OCI-LY7 (cell line): ENCODE measurements at regions of chr6 and their contacts with region 1.

Region 1: GRCh38 chr6:41072676-41073623 is at the start of gene NFYA:
- DNase-seq: peak; percentile 99
- H3K4me3 ChIP-seq: peak within 1 kb of the TSS; percentile 97
- H3K27ac ChIP-seq: peak within 1 kb of the TSS; percentile 92
- H3K4me1 ChIP-seq: peaks cover 47% of the 10 kb centered on the region
- CTCF ChIP-seq: peak; percentile 55
- total RNA-seq, gene NFYA: 23.5 and 29.5 TPM in 2 replicates

Region 2: DNA sequence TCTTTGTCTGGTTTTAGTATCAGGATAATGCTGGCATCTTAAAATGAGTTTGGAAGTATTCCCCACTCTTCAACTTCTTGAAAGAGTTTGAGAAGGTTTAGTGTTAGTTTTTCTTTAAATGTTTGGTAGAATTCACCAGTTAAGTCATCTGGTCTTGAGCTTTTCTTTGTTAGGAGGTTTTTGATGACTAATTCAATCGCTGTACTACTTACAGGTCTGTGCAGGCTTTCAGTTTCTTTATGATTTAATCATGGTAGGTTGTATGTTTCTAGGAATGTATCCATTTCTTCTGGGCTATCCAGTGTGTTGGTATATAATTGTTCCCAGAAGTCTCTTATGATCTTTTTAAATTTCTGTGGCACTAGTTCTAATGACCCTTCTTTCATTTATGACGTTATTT is 701.3 kb before region 1 on chr6:
- CTCF ChIA-PET with region 1: no interaction called
- POLR2A ChIA-PET with region 1: no interaction called
- intact Hi-C with region 1: no loop called
- DNase-seq: no peak
- H3K4me3 ChIP-seq: no peak overlapping the region
- H3K27ac ChIP-seq: no peak overlapping the region
- H3K4me1 ChIP-seq: no peaks in the 10 kb centered on the region
- CTCF ChIP-seq: no peak

Region 3: DNA sequence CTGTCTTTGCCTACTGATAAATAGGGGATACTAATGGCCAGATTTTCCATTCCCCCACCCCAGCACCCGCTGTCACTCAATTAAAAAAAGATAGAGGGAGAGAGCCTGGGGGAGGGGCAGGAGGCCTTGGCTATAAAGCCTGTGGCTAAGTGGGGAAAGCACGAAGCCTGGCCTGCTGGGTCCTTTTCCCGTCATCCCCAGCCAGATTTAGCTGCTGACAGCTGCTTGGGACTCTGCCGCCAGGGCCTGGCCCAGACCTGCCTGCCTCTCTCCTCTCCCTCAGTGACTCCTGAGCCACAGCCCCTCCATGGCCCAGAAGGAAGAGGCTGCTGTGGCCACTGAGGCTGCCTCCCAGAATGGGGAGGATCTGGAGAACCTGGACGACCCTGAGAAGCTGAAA is 19.9 kb before region 1 on chr6 and contains the start of gene APOBEC2:
- CTCF ChIA-PET with region 1: interaction called, 4 read pairs
- POLR2A ChIA-PET with region 1: interaction called, 13 read pairs
- intact Hi-C with region 1: no loop called
- DNase-seq: no peak
- H3K4me3 ChIP-seq: peak within 1 kb of the TSS; percentile 7
- H3K27ac ChIP-seq: peak within 1 kb of the TSS; percentile 2
- H3K4me1 ChIP-seq: peaks cover 38% of the 10 kb centered on the region
- CTCF ChIP-seq: no peak
- total RNA-seq, gene APOBEC2: not detected in 2 replicates

Region 4: GRCh38 chr6:41132254-41132653 is 59.3 kb after region 1 on chr6:
- CTCF ChIA-PET with region 1: no interaction called
- POLR2A ChIA-PET with region 1: no interaction called
- intact Hi-C with region 1: no loop called
- DNase-seq: no peak
- H3K4me3 ChIP-seq: no peak overlapping the region
- H3K27ac ChIP-seq: no peak overlapping the region
- H3K4me1 ChIP-seq: no peaks in the 10 kb centered on the region
- CTCF ChIP-seq: no peak

Region 5: DNA sequence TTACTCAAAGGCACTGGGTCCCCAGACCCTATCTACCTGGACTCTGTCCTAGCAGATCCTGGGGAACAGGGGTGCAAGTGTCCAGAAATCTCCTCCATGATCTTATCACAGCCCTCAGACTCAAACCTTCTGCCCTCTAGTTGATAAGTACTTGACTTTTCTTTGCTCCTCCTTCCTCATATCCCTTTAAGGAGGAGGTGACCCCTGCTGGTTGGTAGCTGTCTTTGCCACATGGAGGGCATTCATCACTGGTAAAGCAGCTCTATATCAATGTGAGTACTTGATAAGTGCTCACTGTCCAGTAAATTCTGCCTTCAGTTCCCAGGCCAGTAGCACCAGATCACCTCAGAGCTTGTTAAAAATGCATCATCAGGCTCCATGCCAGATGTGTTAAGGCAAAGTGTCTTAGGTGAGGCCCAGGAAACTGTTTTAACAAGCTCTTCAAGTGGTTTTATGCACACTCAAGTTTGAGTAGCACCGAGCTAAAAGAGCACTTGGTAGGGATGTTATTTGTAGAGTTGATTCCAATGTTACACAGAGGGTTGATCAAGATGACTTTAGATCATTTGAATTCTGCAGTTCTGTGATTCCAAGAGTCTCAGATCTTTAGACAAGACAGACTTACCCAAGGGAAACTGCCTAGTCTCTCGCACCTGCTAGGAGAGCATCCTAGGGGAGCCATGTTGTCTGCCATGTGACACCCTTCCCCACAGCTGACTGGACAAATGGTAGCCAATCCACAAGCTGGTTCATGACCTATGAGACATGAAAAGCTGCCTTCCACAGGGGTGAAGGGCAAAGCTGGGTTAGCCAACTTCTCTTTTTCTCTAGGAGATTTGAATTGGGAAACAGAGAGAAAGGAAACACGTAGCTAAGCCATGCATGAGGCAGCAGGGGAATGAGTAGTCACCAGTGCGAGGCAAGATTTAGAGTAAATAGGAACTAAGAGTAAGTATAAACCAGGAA is 109.4 kb after region 1 on chr6:
- CTCF ChIA-PET with region 1: interaction called, 3 read pairs
- POLR2A ChIA-PET with region 1: interaction called, 4 read pairs
- intact Hi-C with region 1: loop called (anchors 2 kb)
- DNase-seq: peak; percentile 80
- H3K4me3 ChIP-seq: no peak overlapping the region
- H3K27ac ChIP-seq: no peak overlapping the region
- H3K4me1 ChIP-seq: peaks cover 30% of the 10 kb centered on the region
- CTCF ChIP-seq: peak; percentile 87

Region 6: GRCh38 chr6:41200296-41200900 is 127.4 kb after region 1 on chr6:
- CTCF ChIA-PET with region 1: no interaction called
- POLR2A ChIA-PET with region 1: interaction called, 7 read pairs
- intact Hi-C with region 1: loop called (anchors 2 kb)
- DNase-seq: peak; percentile 73
- H3K4me3 ChIP-seq: peak overlapping the region; percentile 65
- H3K27ac ChIP-seq: peak overlapping the region; percentile 95
- H3K4me1 ChIP-seq: peaks cover 49% of the 10 kb centered on the region
- CTCF ChIP-seq: no peak

Region 7: DNA sequence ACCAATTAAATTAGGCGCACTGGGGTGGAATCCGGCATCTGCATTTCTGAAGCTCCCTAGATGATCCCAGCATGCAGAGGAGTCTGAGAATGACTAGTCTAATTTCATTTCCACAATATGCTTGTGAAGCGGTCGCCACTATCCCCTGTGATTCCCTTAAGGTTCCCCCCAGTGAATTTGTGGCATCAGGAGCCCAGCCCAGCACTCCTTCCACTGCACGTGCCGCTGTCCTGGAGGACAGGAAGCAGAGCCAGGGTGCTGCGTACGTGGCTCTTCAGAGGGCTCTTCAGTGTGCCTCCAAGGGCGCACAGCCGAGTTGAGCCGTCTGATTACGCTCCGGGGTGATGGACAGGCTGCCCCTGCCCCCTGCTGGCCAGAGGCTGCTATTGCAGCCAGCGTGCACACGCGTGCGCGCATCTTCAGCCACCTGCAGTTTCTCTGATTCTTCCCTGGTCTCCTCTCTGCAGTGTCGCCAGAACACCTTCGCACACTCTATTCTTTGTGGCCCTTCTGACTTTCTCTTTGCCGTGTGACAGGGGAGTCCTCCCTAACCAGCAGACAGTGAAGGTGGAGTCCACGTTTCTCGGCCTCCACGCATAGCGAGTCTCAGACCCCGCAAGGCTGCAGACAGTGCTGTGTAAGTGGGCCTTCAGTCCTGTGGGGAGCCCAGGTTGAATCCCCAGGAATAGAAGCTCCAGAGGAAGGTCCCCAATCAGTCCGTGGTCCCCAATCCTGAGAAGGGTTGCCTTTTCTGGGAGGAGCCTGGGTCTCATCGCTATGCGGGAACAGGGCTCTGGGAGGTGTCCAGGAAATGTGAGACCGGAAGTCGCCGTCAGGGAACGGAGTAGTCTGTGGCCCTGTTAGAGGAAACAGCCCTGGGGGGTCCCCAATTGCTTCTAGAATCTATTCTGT is 246.0 kb after region 1 on chr6:
- CTCF ChIA-PET with region 1: no interaction called
- POLR2A ChIA-PET with region 1: interaction called, 3 read pairs
- intact Hi-C with region 1: loop called (anchors 5 kb)
- DNase-seq: peak; percentile 86
- H3K4me3 ChIP-seq: peak overlapping the region; percentile 22
- H3K27ac ChIP-seq: no peak overlapping the region
- H3K4me1 ChIP-seq: peaks cover 7% of the 10 kb centered on the region
- CTCF ChIP-seq: peak; percentile 96

Region 8: DNA sequence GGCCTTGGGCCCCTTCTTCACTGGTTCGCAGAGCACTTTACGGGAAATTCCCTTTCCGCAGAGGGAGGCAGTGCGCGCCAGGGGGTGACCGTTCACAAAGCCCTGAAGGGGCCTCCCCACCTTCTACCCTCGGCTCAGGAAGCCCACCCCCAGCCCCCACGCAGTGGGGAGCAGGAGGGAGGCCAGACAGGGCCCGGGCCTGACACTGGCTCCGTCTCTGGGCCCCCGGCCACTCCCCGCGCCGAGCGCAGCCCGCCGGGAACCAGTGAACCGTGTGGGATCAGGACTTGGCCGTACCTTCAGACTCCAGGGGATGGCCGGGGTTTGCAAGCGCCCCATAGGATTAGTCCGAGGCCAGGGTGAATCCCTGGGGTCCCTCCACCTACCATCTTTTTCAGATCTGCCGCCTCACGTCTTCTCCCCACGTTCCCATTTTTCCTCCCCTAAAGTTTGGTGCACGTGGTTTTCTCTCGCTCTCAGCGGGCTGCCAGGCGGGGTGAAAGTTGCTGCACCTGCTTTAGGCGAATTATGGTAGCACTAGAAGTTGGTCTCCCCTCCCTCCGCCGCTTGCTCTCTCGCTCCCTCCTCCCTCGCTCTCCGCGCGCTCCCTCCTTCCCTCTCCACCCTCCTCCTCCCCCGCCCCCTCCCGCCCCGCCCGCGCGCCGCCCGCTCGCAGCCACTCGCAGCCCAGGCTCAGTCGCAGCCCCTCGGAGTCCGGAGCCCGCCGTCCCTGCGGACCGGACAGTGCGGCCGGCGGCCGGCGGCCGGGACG is 472.9 kb after region 1 on chr6 and contains the start of gene FOXP4:
- CTCF ChIA-PET with region 1: no interaction called
- POLR2A ChIA-PET with region 1: no interaction called
- intact Hi-C with region 1: loop called (anchors 5 kb)
- DNase-seq: peak; percentile 94
- H3K4me3 ChIP-seq: peak within 1 kb of the TSS; percentile 94
- H3K27ac ChIP-seq: peak within 1 kb of the TSS; percentile 61
- H3K4me1 ChIP-seq: peaks cover 28% of the 10 kb centered on the region
- CTCF ChIP-seq: no peak
- total RNA-seq, gene FOXP4: 5.1 and 6.3 TPM in 2 replicates